ENCODE measurements at regions of chr16 and their contacts with region 1.

Region 1: GRCh38 chr16:56911771-56912571 is 20.0 kb upstream of the HERPUD1 start:
- DNase-seq: peak; percentile 87
- ATAC-seq: peak; percentile 87
- H3K4me3 ChIP-seq: peak overlapping the region in 3 of 5 experiments; percentile 12 to 48 (median 14)
- H3K4me3 Mint-ChIP-seq: peak overlapping the region; percentile 73
- H3K27ac ChIP-seq: peak overlapping the region; percentile 86 to 97
- H3K27ac Mint-ChIP-seq: peak overlapping the region; percentile 99
- H3K4me1 ChIP-seq: peaks cover 54 to 69% of the 10 kb centered on the region in 2 donors
- H3K4me1 Mint-ChIP-seq: peaks cover 69% of the 10 kb centered on the region
- H3K27me3 ChIP-seq: no peaks in the 10 kb centered on the region
- H3K27me3 Mint-ChIP-seq: no peaks in the 10 kb centered on the region
- CTCF ChIP-seq: no peak

Region 2: DNA sequence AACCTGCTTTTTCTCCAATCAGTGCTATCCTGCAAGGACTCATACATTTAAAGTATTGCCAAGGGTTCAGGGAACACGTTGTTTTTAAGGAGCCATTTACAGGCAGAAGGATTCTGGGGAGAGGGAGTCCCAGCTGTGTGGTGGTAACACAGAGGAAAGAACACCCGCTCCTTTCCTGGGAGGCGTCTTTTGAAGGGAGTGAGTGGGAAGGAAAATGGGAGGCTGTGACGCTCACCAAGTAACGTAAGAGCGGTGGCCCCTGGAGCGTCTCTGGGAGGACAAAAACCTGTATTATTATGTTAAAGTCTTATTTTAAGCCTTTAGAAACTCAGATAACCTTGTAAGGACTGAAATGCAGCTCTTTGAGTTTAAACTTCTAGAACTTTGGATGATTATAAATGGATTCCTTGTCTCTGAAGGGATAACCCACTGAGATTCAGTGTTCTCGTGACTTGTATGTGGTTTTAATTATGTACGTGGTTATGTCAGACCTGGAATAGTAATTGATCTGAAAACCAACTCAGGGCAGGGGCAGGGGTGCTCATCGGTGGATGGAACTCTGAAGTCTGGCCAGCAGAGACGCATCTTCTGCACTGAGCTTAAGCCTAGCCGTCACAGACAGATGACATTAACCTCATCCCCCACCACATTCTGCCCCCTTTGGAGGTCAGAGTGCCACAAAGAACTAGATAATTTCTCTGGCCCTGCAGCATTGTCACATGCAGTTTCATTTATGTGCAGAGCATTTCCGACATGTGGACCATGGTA is 88.8 kb before region 1 on chr16:
- CTCF ChIA-PET with region 1: no interaction called
- POLR2A ChIA-PET with region 1: interaction called, 14 read pairs
- intact Hi-C with region 1: no loop called
- DNase-seq: no peak
- ATAC-seq: no peak
- H3K4me3 ChIP-seq: no peak overlapping the region
- H3K4me3 Mint-ChIP-seq: no peak overlapping the region
- H3K27ac ChIP-seq: no peak overlapping the region
- H3K27ac Mint-ChIP-seq: no peak overlapping the region
- H3K4me1 ChIP-seq: no peaks in the 10 kb centered on the region
- H3K4me1 Mint-ChIP-seq: no peaks in the 10 kb centered on the region
- H3K27me3 ChIP-seq: no peaks in the 10 kb centered on the region
- H3K27me3 Mint-ChIP-seq: no peaks in the 10 kb centered on the region
- CTCF ChIP-seq: no peak

Region 3: DNA sequence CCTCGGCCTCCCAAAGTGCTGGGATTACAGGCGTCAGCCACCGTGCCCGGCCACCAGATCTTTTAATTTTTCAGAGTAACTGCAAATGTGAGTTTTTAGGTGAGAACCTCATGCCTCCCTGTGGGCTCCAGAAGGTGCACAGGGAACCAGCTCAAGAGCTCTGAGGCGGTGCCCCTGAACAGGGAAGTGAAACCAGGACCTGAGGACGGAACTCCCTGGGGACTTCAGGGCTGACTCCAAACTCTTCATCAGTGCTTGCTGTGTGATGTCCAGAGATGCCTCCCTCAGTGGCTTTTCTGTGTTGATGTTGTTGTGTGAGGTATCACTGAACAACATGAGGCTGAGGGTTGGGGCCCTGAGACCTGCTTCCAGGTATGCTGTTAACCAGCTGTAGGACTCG is 23.2 kb before region 1 on chr16:
- CTCF ChIA-PET with region 1: interaction called, 6 read pairs
- POLR2A ChIA-PET with region 1: interaction called, 13 read pairs
- intact Hi-C with region 1: loop called (anchors 1 kb)
- DNase-seq: peak; percentile 87
- ATAC-seq: peak; percentile 96
- H3K4me3 ChIP-seq: no peak overlapping the region
- H3K4me3 Mint-ChIP-seq: peak overlapping the region; percentile 53
- H3K27ac ChIP-seq: peak overlapping the region in 1 of 2 donors; percentile 39
- H3K27ac Mint-ChIP-seq: peak overlapping the region; percentile 79
- H3K4me1 ChIP-seq: peaks cover 6 to 18% of the 10 kb centered on the region in 2 donors
- H3K4me1 Mint-ChIP-seq: peaks cover 18% of the 10 kb centered on the region
- H3K27me3 ChIP-seq: no peaks in the 10 kb centered on the region
- H3K27me3 Mint-ChIP-seq: no peaks in the 10 kb centered on the region
- CTCF ChIP-seq: no peak

Region 4: DNA sequence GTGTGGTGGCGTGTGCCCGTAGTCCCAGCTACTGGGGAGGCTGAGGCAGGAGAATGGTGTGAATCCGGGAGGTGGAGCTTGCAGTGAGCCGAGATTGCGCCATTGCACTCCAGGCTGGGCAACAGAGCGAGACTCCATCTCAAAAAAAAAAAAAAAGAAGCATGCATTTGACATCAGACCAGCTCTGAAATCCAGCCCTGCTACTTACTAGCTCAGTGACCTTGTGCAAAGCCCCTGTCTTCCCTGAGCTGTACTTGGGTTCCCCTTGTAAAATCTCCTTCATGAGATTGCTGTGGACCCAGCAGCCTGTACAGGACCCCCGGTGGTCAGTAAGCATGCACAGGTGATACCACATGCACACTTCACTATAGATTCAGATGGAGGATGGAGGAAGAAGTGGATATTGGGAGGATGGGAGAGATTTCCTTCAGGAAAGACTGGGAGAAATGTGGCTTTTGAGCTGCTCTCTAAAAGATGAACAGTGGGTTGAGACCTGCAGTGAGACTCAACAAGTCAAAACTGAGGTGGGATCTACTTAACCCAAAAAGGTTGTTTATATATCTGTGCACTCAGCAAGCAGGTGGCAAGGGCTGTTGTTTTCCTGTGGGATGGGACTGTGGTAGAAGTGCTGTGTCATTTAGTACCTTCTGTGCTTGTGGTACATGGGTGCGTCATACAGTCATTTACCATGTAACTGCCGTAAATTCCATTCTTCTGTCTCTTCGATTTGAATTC is 26.6 kb after region 1 on chr16:
- CTCF ChIA-PET with region 1: interaction called, 12 read pairs
- POLR2A ChIA-PET with region 1: interaction called, 108 read pairs
- intact Hi-C with region 1: no loop called
- DNase-seq: no peak
- ATAC-seq: peak; percentile 22
- H3K4me3 ChIP-seq: no peak overlapping the region
- H3K4me3 Mint-ChIP-seq: peak overlapping the region; percentile 80
- H3K27ac ChIP-seq: peak overlapping the region in 1 of 2 donors; percentile 24
- H3K27ac Mint-ChIP-seq: peak overlapping the region; percentile 78
- H3K4me1 ChIP-seq: peaks cover 74 to 82% of the 10 kb centered on the region in 2 donors
- H3K4me1 Mint-ChIP-seq: peaks cover 79% of the 10 kb centered on the region
- H3K27me3 ChIP-seq: no peaks in the 10 kb centered on the region
- H3K27me3 Mint-ChIP-seq: no peaks in the 10 kb centered on the region
- CTCF ChIP-seq: no peak

Region 5: DNA sequence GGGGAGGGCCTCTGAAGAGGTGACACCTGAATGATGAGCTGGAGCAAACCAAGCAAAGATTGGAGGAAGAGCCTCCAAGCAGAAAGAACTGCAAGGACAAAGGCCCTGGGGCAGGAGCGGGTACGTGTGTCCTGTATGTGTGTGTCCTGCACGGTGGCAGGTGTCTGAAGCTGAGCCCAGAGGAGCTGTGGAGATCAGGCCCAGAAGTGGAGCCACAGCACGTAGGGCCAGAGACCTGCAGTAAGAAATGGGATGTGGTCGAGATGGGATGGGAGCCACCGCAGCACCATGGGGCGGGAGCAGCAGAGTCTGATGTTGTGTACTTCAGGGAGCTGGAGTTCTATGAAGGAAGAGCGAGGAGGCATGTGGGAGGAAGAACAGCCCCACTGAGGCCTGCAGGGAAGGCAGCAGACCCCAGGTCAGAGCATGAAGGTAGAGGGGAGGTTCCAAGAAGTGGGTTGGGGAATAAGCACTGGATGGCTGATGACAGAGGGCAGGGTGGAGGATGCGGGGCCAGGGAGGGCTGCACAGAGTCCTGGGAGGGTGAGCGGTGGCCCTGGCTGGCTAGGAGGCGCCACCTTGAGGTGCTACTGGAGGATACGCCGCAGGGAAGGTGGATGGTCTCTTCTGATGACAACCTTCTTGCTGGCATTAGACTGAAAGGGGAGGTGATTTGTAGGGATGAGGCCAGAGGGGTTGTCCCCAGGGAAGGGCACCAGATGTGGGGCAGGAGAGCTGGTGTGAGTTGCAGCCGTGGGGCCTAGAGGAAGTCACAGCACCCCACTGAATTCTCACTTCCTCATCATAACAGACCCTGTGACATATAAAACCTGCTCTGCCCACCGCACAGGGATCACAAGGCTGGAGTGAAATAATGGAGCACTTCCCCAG is 39.2 kb after region 1 on chr16:
- CTCF ChIA-PET with region 1: interaction called, 3 read pairs
- POLR2A ChIA-PET with region 1: no interaction called
- intact Hi-C with region 1: loop called (anchors 5 kb)
- DNase-seq: peak; percentile 92
- ATAC-seq: peak; percentile 84
- H3K4me3 ChIP-seq: peak overlapping the region in 1 of 5 experiments; percentile 1
- H3K4me3 Mint-ChIP-seq: peak overlapping the region; percentile 68
- H3K27ac ChIP-seq: peak overlapping the region; percentile 42 to 58
- H3K27ac Mint-ChIP-seq: peak overlapping the region; percentile 83
- H3K4me1 ChIP-seq: peaks cover 24 to 26% of the 10 kb centered on the region in 2 donors
- H3K4me1 Mint-ChIP-seq: peaks cover 41% of the 10 kb centered on the region
- H3K27me3 ChIP-seq: no peaks in the 10 kb centered on the region
- H3K27me3 Mint-ChIP-seq: no peaks in the 10 kb centered on the region
- CTCF ChIP-seq: peak; percentile 49